Right cardiac atrium (tissue), 5 donors: ENCODE measurements at regions of chr22 and their contacts with region 1.

Region 1: GRCh38 chr22:26756675-26757293 is 99.4 kb downstream of the MIAT start:
- DNase-seq: peak; percentile 68 to 88 (median 87)
- ATAC-seq: peak; percentile 85 to 92
- H3K4me3 ChIP-seq: no peak overlapping the region
- H3K27ac ChIP-seq: no peak overlapping the region
- H3K4me1 ChIP-seq: no peaks in the 10 kb centered on the region
- H3K27me3 ChIP-seq: no peaks in the 10 kb centered on the region

Region 2: GRCh38 chr22:26865021-26865420 is 108.2 kb after region 1 on chr22:
- intact Hi-C with region 1: no loop called
- DNase-seq: no peak
- ATAC-seq: no peak
- H3K4me3 ChIP-seq: no peak overlapping the region
- H3K27ac ChIP-seq: no peak overlapping the region
- H3K4me1 ChIP-seq: no peaks in the 10 kb centered on the region
- H3K27me3 ChIP-seq: no peaks in the 10 kb centered on the region

Region 3: GRCh38 chr22:27318516-27318915 is 561.7 kb after region 1 on chr22:
- intact Hi-C with region 1: loop called in 1 of 4 experiments (anchors 10 kb)
- DNase-seq: peak; percentile 35 to 81 (median 71)
- ATAC-seq: peak; percentile 59 to 70
- H3K4me3 ChIP-seq: no peak overlapping the region
- H3K27ac ChIP-seq: no peak overlapping the region
- H3K4me1 ChIP-seq: no peaks in the 10 kb centered on the region
- H3K27me3 ChIP-seq: no peaks in the 10 kb centered on the region

Region 4: GRCh38 chr22:28019881-28020871 is 1263.4 kb after region 1 on chr22:
- intact Hi-C with region 1: loop called in 1 of 4 experiments (anchors 10 kb)
- DNase-seq: peak; percentile 74 to 90 (median 87)
- ATAC-seq: peak; percentile 65 to 79
- H3K4me3 ChIP-seq: no peak overlapping the region
- H3K27ac ChIP-seq: no peak overlapping the region
- H3K4me1 ChIP-seq: peaks cover 13% of the 10 kb centered on the region
- H3K27me3 ChIP-seq: no peaks in the 10 kb centered on the region